ENCODE measurements at regions of chr7 and their contacts with region 1.

Region 1: DNA sequence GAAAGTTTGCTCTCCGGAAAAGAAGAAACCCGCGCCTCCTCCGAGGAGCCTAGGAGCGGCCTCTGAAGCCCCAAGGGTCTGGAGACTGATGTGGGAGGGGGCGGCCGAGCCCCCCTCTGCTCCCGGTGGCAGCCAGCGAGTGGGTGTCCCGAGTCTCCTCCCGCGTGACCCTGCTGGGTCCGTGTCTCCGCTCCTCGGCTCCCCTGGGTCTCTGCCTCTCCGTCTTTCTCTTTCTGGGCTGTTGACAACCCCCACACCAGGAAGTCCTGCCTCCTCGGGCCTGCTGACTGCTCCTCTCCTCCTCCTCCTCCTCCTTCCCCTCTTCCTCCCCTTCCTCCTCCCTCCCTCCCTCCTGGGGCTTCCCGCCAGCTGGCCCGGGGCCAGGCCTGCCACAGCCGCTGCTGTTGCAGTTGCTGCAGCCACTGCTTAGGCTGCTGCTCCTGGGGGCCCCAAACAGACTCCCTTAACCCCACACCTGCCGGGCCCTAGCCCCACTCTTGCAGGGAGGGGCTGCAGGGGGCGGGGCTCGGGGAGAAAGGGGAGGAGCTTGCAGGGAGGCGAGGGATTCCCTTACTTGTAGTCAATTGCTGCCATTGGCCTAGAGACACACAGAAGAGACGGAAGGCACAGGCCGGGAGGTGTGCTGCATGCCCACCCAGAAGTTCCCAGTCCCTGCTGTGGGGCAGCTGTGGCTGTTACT is at the start of gene TSC22D4:
- DNase-seq: peak; percentile 95
- ATAC-seq: peak; percentile 84
- H3K4me3 Mint-ChIP-seq: peak within 1 kb of the TSS; percentile 98
- H3K27ac Mint-ChIP-seq: peak within 1 kb of the TSS; percentile 92
- H3K4me1 Mint-ChIP-seq: peaks cover 37% of the 10 kb centered on the region
- H3K27me3 Mint-ChIP-seq: no peaks in the 10 kb centered on the region
- total RNA-seq, gene TSC22D4: 129 to 132 TPM

Region 2: GRCh38 chr7:100369105-100369504 is 110.0 kb before region 1 on chr7:
- CTCF ChIA-PET with region 1: no interaction called
- POLR2A ChIA-PET with region 1: no interaction called
- DNase-seq: no peak
- ATAC-seq: no peak
- H3K4me3 Mint-ChIP-seq: no peak overlapping the region
- H3K27ac Mint-ChIP-seq: peak overlapping the region; percentile 87
- H3K4me1 Mint-ChIP-seq: peaks cover 68% of the 10 kb centered on the region
- H3K27me3 Mint-ChIP-seq: no peaks in the 10 kb centered on the region

Region 3: GRCh38 chr7:100396421-100396982 is 82.6 kb before region 1 on chr7:
- CTCF ChIA-PET with region 1: no interaction called
- POLR2A ChIA-PET with region 1: no interaction called
- DNase-seq: peak; percentile 77
- ATAC-seq: peak; percentile 92
- H3K4me3 Mint-ChIP-seq: peak overlapping the region; percentile 58
- H3K27ac Mint-ChIP-seq: peak overlapping the region; percentile 79
- H3K4me1 Mint-ChIP-seq: peaks cover 23% of the 10 kb centered on the region
- H3K27me3 Mint-ChIP-seq: peaks cover 18% of the 10 kb centered on the region

Region 4: DNA sequence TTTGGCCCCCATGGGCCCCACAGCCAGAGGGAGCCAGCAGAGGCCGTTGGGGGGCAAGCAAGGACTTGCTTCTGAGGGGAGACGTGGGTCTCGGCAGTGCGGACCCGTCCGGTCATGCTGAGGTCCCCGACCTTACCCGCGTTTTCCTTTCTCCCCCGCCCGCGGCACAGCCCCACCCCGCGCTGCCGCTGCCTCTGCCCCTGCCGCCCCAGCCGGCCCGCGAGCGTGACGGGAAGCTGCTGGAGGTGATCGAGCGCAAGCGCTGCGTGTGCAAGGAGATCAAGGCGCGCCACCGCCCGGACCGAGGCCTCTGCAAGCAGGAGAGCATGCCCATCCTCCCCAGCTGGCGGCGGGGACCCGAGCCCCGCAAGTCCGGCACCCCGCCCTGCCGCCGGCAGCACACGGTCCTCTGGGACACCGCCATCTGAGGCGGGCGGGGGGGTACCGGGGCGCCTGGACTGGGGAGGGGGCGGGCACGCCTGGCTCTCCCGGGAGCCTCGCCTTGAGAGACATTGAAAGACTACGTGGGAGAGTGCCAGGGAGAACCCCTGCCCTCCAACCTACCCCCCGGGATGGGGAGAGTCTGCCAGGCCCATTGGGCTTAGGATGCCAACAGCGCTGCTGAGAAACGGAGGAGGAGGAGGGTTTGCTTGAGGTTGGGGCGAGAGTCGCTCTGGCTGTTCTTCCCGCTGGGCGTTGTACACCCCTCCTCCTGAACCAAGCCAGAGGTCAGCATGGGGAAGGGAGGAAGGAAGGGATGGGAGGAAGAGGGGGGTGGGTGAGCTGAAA is 14.6 kb after region 1 on chr7:
- CTCF ChIA-PET with region 1: interaction called, 19 read pairs
- POLR2A ChIA-PET with region 1: no interaction called
- DNase-seq: peak; percentile 73
- ATAC-seq: peak; percentile 84
- H3K4me3 Mint-ChIP-seq: peak overlapping the region; percentile 48
- H3K27ac Mint-ChIP-seq: peak overlapping the region; percentile 43
- H3K4me1 Mint-ChIP-seq: peaks cover 14% of the 10 kb centered on the region
- H3K27me3 Mint-ChIP-seq: peaks cover 9% of the 10 kb centered on the region

Region 5: DNA sequence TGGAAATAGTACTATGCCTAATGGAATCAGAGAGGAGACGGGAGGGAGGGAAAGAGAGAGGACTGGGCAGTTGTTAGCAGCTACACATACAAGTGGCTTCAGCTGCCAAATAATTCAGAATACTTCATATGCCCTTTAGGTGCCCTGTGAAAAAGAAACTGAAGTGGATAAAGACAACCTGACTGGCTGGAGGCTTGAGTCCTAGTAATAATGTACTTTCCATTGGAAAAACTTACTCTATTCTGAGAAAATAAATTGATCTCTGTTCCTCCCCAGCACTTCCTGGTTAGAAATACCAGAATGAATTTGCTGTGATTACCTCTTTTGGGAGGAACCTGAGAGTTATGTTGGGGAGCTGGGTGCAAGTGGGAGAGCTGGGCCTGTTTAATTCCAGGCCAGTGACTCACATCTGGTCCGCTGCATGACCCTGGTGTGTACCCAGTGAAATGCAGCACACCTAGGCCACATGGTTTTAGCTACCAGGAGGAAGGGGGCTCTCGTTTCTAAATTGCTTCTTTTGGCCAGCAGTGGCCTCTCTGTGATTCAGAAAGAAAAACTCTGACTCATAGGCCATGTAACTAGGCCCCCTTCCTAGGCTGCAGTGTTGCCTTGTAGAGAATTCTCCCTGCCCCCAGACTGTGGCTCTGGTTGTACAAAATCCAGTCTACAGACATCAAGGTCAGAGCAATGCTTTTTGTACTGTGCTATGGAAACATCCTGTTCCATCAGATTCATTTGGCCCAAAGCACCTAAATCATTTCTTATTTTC is 66.4 kb after region 1 on chr7:
- CTCF ChIA-PET with region 1: interaction called, 10 read pairs
- POLR2A ChIA-PET with region 1: interaction called, 12 read pairs
- DNase-seq: peak; percentile 55
- ATAC-seq: peak; percentile 55
- H3K4me3 Mint-ChIP-seq: peak overlapping the region; percentile 57
- H3K27ac Mint-ChIP-seq: peak overlapping the region; percentile 87
- H3K4me1 Mint-ChIP-seq: peaks cover 97% of the 10 kb centered on the region
- H3K27me3 Mint-ChIP-seq: no peaks in the 10 kb centered on the region

Measured in activated CD8-positive, alpha-beta T cell treated with anti-CD3 and anti-CD28 coated beads, Interleukin-2, amount 10 ng/mL, durations not matched to agents 7 days and 5 days (primary cell).